ENCODE measurements at regions of chr14 and their contacts with region 1.

Region 1: GRCh38 chr14:54396493-54397335 is at the start of gene CDKN3:
- DNase-seq: peak; percentile 97 to 99
- ATAC-seq: peak; percentile 98
- H3K4me3 ChIP-seq: peak within 1 kb of the TSS; percentile 78
- H3K27ac ChIP-seq: peak within 1 kb of the TSS; percentile 81 to 93
- H3K4me1 ChIP-seq: peaks cover 28% of the 10 kb centered on the region
- CTCF ChIP-seq: no peak
- EP300 ChIP-seq: no peak
- POLR2A ChIP-seq: peak; percentile 89
- RAD21 ChIP-seq: no peak
- polyA plus RNA-seq, gene CDKN3: 142 and 154 TPM in 2 replicates

Region 2: GRCh38 chr14:54411371-54411770 is 14.7 kb after region 1 on chr14:
- CTCF ChIA-PET with region 1: interaction called, 13 read pairs
- POLR2A ChIA-PET with region 1: interaction called, 3 read pairs
- DNase-seq: no peak
- ATAC-seq: no peak
- H3K4me3 ChIP-seq: no peak overlapping the region
- H3K27ac ChIP-seq: no peak overlapping the region
- H3K4me1 ChIP-seq: no peaks in the 10 kb centered on the region
- CTCF ChIP-seq: no peak
- EP300 ChIP-seq: no peak
- POLR2A ChIP-seq: no peak
- RAD21 ChIP-seq: no peak

Region 3: DNA sequence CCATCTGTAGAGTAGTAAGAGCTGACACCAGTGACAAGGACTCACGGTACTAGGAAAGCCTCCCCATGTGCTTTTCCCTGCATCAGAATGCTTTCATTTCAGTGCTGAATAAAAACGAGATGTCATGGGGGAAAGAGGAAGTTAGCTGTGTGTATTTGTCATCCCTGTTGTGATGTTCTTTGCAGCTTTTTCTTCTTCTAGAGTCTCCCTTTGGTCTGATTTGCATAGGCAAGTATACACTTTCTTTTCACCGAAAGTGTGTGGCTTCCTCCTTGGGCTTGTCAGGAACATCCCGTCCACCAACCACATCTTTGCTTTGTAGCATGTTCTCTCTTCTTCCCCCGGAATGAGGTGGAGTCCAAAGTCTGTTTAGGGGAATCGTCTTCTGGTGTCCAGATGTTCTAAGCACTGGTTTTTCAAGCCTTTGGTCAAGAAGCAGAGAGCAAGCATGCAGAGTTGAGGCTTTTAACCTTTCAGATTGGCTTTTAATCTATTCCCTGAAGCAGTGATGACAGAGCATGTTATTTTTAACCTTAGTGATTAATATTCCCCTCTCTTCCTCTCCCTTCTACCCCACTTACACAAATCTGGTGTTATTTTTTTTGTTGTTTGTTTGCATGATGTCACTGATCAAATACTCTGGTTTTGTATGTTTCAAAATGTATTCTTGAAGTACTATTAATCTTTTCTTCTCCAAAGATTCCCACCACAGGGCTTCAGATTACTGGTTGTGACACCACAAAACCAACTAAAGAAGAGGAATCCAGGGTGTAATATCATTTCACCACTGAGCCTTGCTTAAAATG is 333.6 kb after region 1 on chr14:
- CTCF ChIA-PET with region 1: no interaction called
- POLR2A ChIA-PET with region 1: no interaction called
- DNase-seq: peak in 1 of 2 experiments; percentile 4
- ATAC-seq: peak in 1 of 2 experiments; percentile 36; a peak in 2 of 6 replicates
- H3K4me3 ChIP-seq: no peak overlapping the region
- H3K27ac ChIP-seq: no peak overlapping the region
- H3K4me1 ChIP-seq: peaks cover 10% of the 10 kb centered on the region; the same call in 2 of the 3 replicates
- CTCF ChIP-seq: no peak
- EP300 ChIP-seq: no peak
- POLR2A ChIP-seq: no peak
- RAD21 ChIP-seq: no peak

Measured in A549 (cell line).